Stomach (tissue), 19 donors: ENCODE measurements at regions of chr4 and their contacts with region 1.

Region 1: DNA sequence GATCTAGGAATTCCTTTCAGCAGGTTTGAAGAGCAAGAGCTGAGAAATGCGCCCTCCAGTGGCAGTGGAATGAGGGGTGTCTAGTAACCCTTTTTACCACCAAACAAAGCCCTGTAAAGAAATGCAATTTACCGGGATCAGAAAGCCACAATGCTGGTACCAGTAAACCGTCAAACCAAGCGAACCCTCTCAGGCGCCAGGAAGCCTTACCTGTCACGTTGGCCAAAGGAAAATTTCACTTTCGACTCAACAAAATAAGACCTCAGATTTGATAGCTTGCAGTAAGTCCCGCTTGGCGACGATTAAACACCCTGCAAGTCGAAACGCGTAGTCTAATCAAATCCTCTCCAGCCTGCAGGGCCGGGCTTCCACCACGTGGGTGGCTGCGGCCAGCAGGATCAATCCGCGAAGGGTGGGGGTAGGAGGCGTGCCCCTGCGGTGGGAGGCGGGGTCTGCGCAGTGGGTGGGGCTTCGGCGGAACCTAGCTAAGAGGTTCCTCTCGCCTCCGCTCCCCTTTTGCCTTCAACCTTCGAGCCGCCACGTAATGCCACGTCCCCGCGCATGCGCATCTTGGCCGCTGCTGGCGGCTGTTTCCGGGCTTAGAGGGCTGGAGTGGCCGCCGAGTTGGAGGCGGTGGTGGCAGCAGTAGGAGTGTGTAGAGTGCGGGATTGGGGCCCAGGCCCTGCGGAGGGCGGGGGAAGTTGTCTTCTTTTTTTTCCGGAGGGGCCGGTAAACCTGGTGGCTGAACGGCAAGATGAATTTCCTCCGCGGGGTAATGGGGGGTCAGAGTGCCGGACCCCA is at the start of gene USO1:
- DNase-seq: peak; percentile 99 to 100
- H3K4me3 ChIP-seq: peak within 1 kb of the TSS; percentile 75 to 96 (median 90)
- H3K27ac ChIP-seq: peak within 1 kb of the TSS; percentile 93 to 99 (median 99)
- H3K4me1 ChIP-seq: peaks cover 17 to 55% (median 43%) of the 10 kb centered on the region in 4 donors
- H3K27me3 ChIP-seq: no peaks in the 10 kb centered on the region
- CTCF ChIP-seq: peak in 5 of 7 experiments; percentile 46 to 79 (median 63)
- EP300 ChIP-seq: no peak
- POLR2A ChIP-seq: peak in 2 of 4 donors; percentile 92 to 96
- total RNA-seq, gene USO1: 20.6 to 120 (median 104) TPM

Region 2: GRCh38 chr4:75673027-75673958 is 51.0 kb before region 1 on chr4 and contains the start of gene G3BP2:
- intact Hi-C with region 1: loop called (anchors 10 kb)
- DNase-seq: peak; percentile 98 to 100
- H3K4me3 ChIP-seq: peak within 1 kb of the TSS; percentile 82 to 98 (median 93)
- H3K27ac ChIP-seq: peak within 1 kb of the TSS; percentile 90 to 100 (median 98)
- H3K4me1 ChIP-seq: peaks cover 7 to 48% (median 39%) of the 10 kb centered on the region in 4 donors
- H3K27me3 ChIP-seq: no peaks in the 10 kb centered on the region
- CTCF ChIP-seq: no peak
- EP300 ChIP-seq: no peak
- POLR2A ChIP-seq: peak in 2 of 4 donors; percentile 70 to 95
- total RNA-seq, gene G3BP2: 24.5 to 183 (median 50.1) TPM